ENCODE measurements at regions of chr2 and their contacts with region 1.

Region 1: DNA sequence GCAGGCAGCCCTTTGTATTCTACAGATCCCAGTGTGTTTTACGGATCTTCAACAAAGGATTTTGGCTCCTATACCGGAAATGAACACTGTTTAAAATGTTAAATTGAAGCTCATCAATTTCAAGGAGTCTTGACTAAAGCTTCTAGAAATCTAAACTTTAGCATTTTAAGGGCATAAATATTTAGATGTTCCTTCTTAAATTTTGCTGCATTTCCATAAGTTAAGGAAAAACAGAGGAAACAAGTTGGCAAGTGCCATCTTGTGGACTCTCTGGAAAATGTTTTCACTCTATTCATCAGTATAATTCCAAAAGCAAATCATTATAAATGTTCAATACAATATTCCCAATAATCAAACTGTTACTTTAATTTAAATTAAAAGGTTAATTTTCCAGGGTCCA is 19.6 kb downstream of the CHN1 start:
- DNase-seq: no peak
- ATAC-seq: no peak
- H3K4me3 ChIP-seq: no peak overlapping the region
- H3K27ac ChIP-seq: no peak overlapping the region
- H3K4me1 ChIP-seq: no peaks in the 10 kb centered on the region
- H3K27me3 ChIP-seq: no peaks in the 10 kb centered on the region
- CTCF ChIP-seq: peak in 5 of 7 experiments; percentile 36 to 52 (median 44)
- POLR2A ChIP-seq: no peak

Region 2: DNA sequence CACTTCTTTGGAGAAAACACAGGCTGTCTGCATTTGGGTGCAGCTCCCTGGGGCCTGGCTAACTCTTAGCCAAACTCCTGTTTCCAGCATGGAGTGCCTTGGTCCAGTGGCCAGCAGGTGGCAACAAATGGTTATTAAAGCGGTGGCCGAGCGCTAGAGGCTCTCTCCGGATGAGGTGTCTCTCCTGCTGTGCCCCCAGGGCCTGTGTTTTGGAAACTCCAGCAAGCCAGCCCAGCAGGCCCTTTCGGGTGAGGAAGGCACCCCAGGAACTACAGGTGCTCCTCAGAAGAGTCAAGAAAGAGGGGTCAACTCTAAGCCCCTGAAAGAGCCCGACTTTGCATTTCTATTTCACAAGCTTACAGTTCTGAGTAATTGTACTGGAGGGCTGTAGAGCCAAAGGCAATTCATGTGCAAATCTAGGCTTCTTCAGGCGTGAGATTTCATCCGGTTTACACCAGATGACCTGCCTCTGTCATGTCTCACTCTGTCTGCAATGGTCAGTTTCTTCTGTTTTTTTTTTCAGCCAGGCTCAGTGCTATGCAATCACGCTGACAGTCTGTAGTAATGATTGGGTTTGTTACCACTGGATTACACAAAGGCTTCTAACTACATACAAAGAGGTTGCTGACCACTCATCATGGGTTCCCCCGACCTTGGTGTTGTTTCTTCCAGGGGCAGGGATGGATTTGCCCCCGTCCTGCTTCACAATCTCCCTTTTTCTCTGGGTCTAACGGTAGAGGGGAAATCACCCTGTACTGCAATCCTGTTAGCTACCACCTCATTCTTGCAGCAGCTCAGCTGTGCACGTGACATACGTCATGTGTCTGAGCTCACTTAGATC is 213.8 kb before region 1 on chr2:
- intact Hi-C with region 1: loop called (anchors 5 kb)
- DNase-seq: peak; percentile 68 to 79 (median 72)
- ATAC-seq: peak; percentile 88
- H3K4me3 ChIP-seq: no peak overlapping the region
- H3K27ac ChIP-seq: no peak overlapping the region
- H3K4me1 ChIP-seq: peaks cover 4% of the 10 kb centered on the region
- H3K27me3 ChIP-seq: no peaks in the 10 kb centered on the region
- CTCF ChIP-seq: peak; percentile 54 to 83 (median 71)
- POLR2A ChIP-seq: no peak

Region 3: DNA sequence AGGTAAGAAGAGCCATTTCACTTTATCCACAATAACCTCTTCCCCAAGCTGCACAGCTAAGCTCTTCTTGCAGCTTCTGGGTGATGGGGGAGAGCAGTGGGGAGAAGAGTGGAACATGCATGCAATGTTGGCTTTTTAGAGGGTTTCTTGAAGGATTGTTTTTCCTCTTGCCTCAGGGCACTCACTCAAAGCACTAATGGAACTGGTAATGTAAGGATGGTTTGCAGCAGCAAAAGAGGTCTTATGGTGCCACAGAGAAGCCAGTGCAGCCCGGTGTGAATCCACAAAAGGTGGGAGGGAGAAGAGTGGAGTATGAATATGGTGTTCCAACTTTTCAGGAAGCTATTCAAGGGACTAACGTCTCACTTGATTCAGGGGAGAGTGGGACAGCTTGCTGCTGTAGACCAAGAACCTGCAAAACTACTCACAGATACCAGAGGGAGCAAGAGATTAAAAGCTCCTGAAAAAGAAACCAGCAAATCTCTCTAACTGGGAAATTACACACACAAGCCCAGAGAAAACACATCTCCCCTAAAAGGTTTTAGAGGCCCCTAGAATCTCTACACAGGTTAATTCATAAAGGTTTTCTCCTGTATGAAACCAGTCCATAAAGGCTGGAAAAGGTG is 96.9 kb before region 1 on chr2:
- intact Hi-C with region 1: no loop called
- DNase-seq: no peak
- ATAC-seq: no peak
- H3K4me3 ChIP-seq: no peak overlapping the region
- H3K27ac ChIP-seq: no peak overlapping the region
- H3K4me1 ChIP-seq: no peaks in the 10 kb centered on the region
- H3K27me3 ChIP-seq: no peaks in the 10 kb centered on the region
- CTCF ChIP-seq: no peak
- POLR2A ChIP-seq: no peak

Measured in body of pancreas (tissue), 4 donors.